Activated CD4-positive, alpha-beta memory T cell treated with anti-CD3 and anti-CD28 coated beads for 36 hours (primary cell): ENCODE measurements at regions of chrX and their contacts with region 1.

Region 1: DNA sequence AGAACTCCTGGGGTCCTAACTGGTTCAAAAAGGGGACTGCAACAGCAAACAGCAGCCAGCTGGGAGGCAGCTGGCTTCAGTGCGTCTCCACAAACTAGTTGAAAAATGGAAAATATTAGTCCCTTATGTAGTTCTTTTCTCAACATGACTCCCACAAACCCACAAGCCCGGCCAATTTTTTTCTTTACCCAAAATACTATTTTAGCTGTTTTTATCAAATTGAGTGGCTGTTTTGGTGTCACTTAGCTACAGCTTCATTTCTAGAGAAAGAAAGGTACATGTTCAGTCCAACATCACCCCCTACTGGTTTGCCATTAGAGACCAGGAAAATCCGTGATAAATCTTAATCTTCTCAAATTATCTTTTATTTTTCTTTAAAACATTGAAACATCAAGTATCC is 97.2 kb downstream of the GUCY2F start:
- DNase-seq: no peak
- H3K4me3 Mint-ChIP-seq: no peak overlapping the region
- H3K27ac Mint-ChIP-seq: no peak overlapping the region
- H3K4me1 Mint-ChIP-seq: no peaks in the 10 kb centered on the region
- H3K27me3 Mint-ChIP-seq: no peaks in the 10 kb centered on the region

Region 2: GRCh38 chrX:108699368-108699767 is 685.3 kb before region 1 on chrX:
- CTCF ChIA-PET with region 1: no interaction called
- POLR2A ChIA-PET with region 1: no interaction called
- intact Hi-C with region 1: loop called (anchors 5 kb)
- DNase-seq: no peak
- H3K4me3 Mint-ChIP-seq: no peak overlapping the region
- H3K27ac Mint-ChIP-seq: no peak overlapping the region
- H3K4me1 Mint-ChIP-seq: no peaks in the 10 kb centered on the region
- H3K27me3 Mint-ChIP-seq: no peaks in the 10 kb centered on the region